Uterus (tissue), 4 donors: ENCODE measurements at regions of chr7 and their contacts with region 1.

Region 1: GRCh38 chr7:66140924-66141323 is 26.3 kb downstream of the CRCP start:
- DNase-seq: peak; percentile 76 to 77
- H3K4me3 ChIP-seq: no peak overlapping the region
- H3K27ac ChIP-seq: peak overlapping the region; percentile 53 to 54
- H3K4me1 ChIP-seq: no peaks in the 10 kb centered on the region
- H3K27me3 ChIP-seq: no peaks in the 10 kb centered on the region
- CTCF ChIP-seq: peak; percentile 60 to 71 (median 64)
- POLR2A ChIP-seq: no peak

Region 2: DNA sequence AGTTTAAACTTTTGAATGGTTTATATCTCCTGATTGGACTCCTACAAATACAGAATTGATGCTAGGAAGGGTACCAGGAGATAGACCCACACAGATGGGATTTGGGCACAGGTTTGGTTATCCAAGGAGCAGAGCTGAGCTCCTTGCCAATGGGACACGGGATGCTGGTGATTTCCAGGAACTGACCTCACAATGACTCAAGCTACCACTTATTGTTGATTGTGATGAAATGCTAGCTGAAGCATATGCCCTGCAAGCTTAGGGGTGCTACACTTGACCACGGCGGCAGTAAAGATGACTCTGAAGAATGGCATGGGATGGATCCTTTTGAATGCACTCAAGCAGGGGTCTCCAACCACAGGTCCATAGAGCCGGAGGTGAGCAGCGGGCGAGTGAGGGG is 313.6 kb before region 1 on chr7:
- intact Hi-C with region 1: no loop called
- DNase-seq: no peak
- H3K4me3 ChIP-seq: no peak overlapping the region
- H3K27ac ChIP-seq: no peak overlapping the region
- H3K4me1 ChIP-seq: no peaks in the 10 kb centered on the region
- H3K27me3 ChIP-seq: no peaks in the 10 kb centered on the region
- CTCF ChIP-seq: no peak
- POLR2A ChIP-seq: no peak

Region 3: DNA sequence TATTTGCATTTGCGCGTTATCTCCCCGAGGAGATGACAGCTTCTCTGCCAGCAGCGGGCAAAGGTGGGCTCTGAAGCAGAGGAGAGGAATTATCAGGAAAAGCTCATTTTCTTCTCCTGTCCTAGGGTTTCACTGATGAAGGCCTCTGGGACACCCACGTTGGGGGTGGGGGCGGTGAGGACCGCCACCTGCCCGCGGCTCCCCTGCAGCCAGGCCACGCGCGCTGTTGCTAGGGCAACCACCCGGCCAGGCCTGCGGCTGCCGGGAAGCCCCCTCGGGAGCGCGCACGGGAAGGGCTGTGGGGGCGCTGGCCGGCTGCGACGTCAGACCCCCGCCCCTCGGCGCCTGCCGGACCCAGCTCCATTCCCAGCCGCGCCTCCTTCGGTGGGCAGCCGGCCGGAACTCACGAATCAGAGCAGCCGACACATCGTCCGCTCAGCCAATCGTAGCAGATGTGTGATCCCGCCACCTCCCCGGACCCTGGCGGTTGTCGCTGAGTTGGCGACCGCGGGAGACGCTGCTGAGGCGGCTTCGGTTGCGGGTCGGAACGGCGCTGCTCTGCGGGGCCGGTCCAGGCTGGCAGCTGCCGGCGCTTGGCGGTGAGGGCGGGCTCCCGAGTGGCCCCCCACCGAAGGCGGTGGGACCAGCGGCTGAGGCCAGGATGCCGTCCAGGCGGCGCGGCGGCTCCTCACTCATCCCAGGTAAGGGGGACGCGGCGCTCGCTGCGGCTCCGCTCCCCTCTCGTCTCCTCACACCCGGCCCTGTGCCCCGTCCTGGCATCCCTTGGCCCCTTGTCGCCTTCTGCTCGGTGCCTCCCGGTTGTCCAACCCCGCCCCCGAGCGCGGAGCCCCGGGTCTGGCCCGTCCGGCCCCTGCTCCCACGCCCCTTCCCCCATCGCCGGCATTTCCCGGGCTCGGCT is 64.2 kb after region 1 on chr7 and contains the start of gene TPST1:
- intact Hi-C with region 1: loop called (anchors 10 kb)
- DNase-seq: peak; percentile 87 to 91
- H3K4me3 ChIP-seq: peak within 1 kb of the TSS; percentile 65 to 73
- H3K27ac ChIP-seq: peak within 1 kb of the TSS; percentile 69 to 76
- H3K4me1 ChIP-seq: no peaks in the 10 kb centered on the region
- H3K27me3 ChIP-seq: no peaks in the 10 kb centered on the region
- CTCF ChIP-seq: peak; percentile 10 to 87 (median 66)
- POLR2A ChIP-seq: peak; percentile 70 to 96
- total RNA-seq, gene TPST1: 21.0 to 97.0 (median 34.8) TPM